GM10248 (cell line): ENCODE measurements at regions of chr3 and their contacts with region 1.

Region 1: DNA sequence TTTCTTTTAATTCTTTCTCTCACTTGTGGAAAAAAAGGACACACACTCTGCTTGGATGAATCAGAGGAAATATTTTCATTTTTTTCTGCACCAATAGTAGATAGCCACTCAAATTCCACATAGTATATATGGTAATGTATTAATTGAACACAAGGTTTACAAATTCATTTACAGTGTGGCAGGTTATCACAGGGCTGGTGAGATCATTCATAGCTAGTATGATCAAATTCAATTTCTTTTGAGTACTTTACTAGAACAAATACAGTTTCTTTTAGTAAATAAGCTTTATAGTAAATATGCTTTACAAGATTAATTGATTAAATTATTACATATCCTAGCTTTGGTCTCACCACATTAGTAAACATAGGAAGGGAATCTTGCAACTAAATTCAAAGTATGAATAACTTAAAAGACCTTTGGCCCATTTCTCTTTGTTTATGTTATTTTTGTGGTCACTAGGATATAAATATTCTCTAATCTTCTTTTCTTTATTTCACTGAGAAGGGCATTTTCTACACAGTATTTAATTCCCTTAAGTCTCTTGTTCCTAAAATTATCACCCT is 40.1 kb upstream of the PARP14 start:
- DNase-seq: no peak
- CTCF ChIP-seq: no peak

Region 2: DNA sequence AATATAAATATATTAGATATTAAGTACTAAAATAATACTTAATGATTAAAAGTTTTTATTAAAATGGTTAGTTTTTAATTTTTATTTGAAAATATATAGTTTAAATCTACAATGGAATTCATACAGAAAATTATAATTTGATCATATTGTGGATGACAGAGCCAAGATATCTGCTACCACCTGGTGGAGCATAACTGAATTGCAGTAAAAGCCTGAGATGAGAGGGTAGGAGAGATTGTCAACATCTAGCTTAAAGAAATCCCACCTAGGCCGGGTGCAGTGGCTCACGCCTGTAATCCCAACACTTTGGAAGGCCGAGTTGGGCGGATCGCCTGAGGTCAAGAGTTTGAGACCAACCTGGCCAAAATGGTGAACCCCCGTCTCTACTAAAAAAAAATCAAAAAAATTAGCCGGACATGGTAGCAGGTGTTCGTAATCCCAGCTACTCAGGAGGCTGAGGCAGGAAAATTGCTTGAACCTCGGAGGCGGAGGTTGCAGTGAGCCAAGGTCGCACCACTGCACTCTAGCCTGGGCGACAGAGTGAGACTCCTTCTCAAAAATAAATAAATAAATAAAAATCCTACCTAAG is 340.6 kb before region 1 on chr3:
- CTCF ChIA-PET with region 1: no interaction called
- POLR2A ChIA-PET with region 1: no interaction called
- DNase-seq: no peak
- CTCF ChIP-seq: peak; percentile 56

Region 3: DNA sequence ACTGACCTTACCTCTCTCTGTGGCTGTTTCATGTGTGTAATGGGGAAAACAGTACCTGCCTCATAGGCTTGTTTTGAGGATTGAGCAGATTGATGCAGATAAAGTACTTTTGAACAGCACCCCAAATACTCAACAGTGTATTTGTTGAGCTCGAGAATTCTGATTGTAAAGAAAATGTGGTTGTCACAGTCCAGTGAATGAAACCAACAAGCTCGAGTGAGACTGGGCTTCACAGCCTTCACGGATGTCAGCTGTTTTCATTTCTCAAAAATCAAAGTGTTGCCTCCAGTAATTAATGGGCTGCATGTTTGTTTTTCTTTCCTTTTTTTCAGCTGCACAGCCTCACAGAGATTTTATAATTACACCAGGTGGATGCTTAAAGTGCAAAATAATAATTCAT is 19.4 kb before region 1 on chr3:
- CTCF ChIA-PET with region 1: interaction called, 10 read pairs
- POLR2A ChIA-PET with region 1: no interaction called
- DNase-seq: peak; percentile 42
- CTCF ChIP-seq: no peak

Region 4: GRCh38 chr3:122628569-122628968 is 11.9 kb before region 1 on chr3:
- CTCF ChIA-PET with region 1: interaction called, 12 read pairs
- POLR2A ChIA-PET with region 1: no interaction called
- DNase-seq: no peak
- CTCF ChIP-seq: no peak

Region 5: GRCh38 chr3:122745346-122746021 is 105.0 kb after region 1 on chr3:
- CTCF ChIA-PET with region 1: no interaction called
- POLR2A ChIA-PET with region 1: no interaction called
- DNase-seq: no peak
- CTCF ChIP-seq: no peak